ENCODE measurements at regions of chr6 and their contacts with region 1.

Region 1: GRCh38 chr6:154733012-154733625 is at the start of gene SCAF8:
- DNase-seq: peak; percentile 83
- ATAC-seq: peak; percentile 72
- H3K4me3 ChIP-seq: peak within 1 kb of the TSS; percentile 79
- H3K27ac ChIP-seq: peak within 1 kb of the TSS; percentile 90
- H3K4me1 ChIP-seq: peaks cover 20% of the 10 kb centered on the region
- H3K27me3 ChIP-seq: no peaks in the 10 kb centered on the region
- CTCF ChIP-seq: peak; percentile 59
- total RNA-seq, gene SCAF8: 11.9 and 15.0 TPM in 2 replicates

Region 2: GRCh38 chr6:154615483-154616025 is 117.6 kb before region 1 on chr6:
- CTCF ChIA-PET with region 1: no interaction called
- POLR2A ChIA-PET with region 1: no interaction called
- intact Hi-C with region 1: no loop called
- DNase-seq: peak; percentile 72
- ATAC-seq: peak; percentile 68
- H3K4me3 ChIP-seq: peak overlapping the region; percentile 53; the same call in 1 of the 2 replicates
- H3K27ac ChIP-seq: no peak overlapping the region
- H3K4me1 ChIP-seq: peaks cover 14% of the 10 kb centered on the region; the same call in 1 of the 2 replicates
- H3K27me3 ChIP-seq: no peaks in the 10 kb centered on the region
- CTCF ChIP-seq: peak; percentile 33; the same call in 1 of the 2 replicates

Region 3: GRCh38 chr6:154675602-154676088 is 57.5 kb before region 1 on chr6:
- CTCF ChIA-PET with region 1: interaction called, 3 read pairs
- POLR2A ChIA-PET with region 1: no interaction called
- intact Hi-C with region 1: loop called (anchors 2 kb)
- DNase-seq: peak; percentile 96
- ATAC-seq: peak; percentile 99
- H3K4me3 ChIP-seq: no peak overlapping the region
- H3K27ac ChIP-seq: no peak overlapping the region
- H3K4me1 ChIP-seq: no peaks in the 10 kb centered on the region
- H3K27me3 ChIP-seq: no peaks in the 10 kb centered on the region
- CTCF ChIP-seq: peak; percentile 99

Region 4: GRCh38 chr6:154767003-154767723 is 34.0 kb after region 1 on chr6:
- CTCF ChIA-PET with region 1: no interaction called
- POLR2A ChIA-PET with region 1: interaction called, 21 read pairs
- intact Hi-C with region 1: no loop called
- DNase-seq: no peak
- ATAC-seq: no peak; the same call in 1 of the 2 replicates
- H3K4me3 ChIP-seq: no peak overlapping the region
- H3K27ac ChIP-seq: no peak overlapping the region
- H3K4me1 ChIP-seq: no peaks in the 10 kb centered on the region
- H3K27me3 ChIP-seq: no peaks in the 10 kb centered on the region
- CTCF ChIP-seq: no peak

Region 5: GRCh38 chr6:154791556-154792317 is 58.6 kb after region 1 on chr6:
- CTCF ChIA-PET with region 1: no interaction called
- POLR2A ChIA-PET with region 1: no interaction called
- intact Hi-C with region 1: loop called (anchors 5 kb)
- DNase-seq: peak; percentile 45
- ATAC-seq: peak; percentile 60
- H3K4me3 ChIP-seq: no peak overlapping the region
- H3K27ac ChIP-seq: no peak overlapping the region
- H3K4me1 ChIP-seq: peaks cover 32% of the 10 kb centered on the region
- H3K27me3 ChIP-seq: no peaks in the 10 kb centered on the region
- CTCF ChIP-seq: no peak

Region 6: DNA sequence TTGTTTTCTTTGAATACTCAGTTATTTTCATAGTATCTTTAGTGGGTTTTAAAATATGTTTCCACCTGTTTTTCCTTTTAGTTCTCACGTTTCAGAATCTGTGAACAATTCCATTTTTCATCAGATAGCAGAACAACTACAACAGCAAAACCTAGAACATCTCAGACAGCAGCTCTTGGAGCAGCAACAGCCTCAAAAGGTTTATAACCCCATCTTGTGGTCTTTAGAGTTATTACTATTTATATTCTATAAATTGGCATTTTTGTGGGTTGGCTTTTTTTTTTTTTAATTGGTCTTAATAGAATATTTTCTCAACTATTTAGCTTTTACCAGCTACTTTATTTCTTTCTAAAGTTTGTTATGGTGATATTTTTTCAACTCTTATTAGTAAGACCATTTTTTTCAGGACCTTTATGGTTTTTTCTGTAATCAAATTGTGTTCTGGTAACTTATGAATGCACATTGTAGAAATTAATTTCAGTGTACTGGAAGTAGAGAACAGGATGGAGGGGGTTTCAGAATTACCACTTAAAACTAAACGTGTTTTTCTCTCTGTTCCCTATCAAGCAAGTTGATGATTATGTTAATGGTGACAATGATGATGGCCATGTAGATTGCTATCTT is 72.3 kb after region 1 on chr6:
- CTCF ChIA-PET with region 1: no interaction called
- POLR2A ChIA-PET with region 1: no interaction called
- intact Hi-C with region 1: loop called (anchors 1 kb)
- DNase-seq: peak; percentile 41
- ATAC-seq: no peak
- H3K4me3 ChIP-seq: no peak overlapping the region
- H3K27ac ChIP-seq: no peak overlapping the region
- H3K4me1 ChIP-seq: no peaks in the 10 kb centered on the region
- H3K27me3 ChIP-seq: no peaks in the 10 kb centered on the region
- CTCF ChIP-seq: peak; percentile 57